ENCODE measurements at regions of chr20 and their contacts with region 1.

Region 1: DNA sequence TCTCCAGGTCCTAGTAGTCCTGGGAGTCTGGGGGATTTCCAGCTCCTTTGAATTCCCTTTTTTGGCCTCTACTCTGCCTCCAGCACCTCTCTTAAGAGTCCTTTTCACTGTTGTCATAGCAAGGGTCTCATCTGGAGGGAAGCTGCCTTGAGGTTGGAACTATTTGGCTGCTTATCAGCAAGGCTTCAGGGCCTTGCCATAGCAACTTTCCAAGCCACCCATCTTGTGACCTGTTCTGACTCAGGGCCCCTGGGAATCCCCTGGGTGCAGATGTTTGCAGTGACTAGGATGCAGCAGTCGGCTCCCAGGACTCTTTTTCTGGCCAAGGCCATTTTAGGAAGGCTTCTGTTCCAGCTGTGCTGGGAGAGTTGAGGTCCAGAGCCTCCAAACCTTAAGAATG is 12.4 kb downstream of the PKIG start:
- DNase-seq: peak in 5 of 7 donors; percentile 65 to 87 (median 77)
- H3K4me3 ChIP-seq: no peak overlapping the region
- H3K27ac ChIP-seq: peak overlapping the region in 2 of 5 donors; percentile 59
- H3K4me1 ChIP-seq: peaks cover 20 to 47% of the 10 kb centered on the region in 2 donors
- H3K27me3 ChIP-seq: no peaks in the 10 kb centered on the region
- CTCF ChIP-seq: no peak
- POLR2A ChIP-seq: no peak

Region 2: DNA sequence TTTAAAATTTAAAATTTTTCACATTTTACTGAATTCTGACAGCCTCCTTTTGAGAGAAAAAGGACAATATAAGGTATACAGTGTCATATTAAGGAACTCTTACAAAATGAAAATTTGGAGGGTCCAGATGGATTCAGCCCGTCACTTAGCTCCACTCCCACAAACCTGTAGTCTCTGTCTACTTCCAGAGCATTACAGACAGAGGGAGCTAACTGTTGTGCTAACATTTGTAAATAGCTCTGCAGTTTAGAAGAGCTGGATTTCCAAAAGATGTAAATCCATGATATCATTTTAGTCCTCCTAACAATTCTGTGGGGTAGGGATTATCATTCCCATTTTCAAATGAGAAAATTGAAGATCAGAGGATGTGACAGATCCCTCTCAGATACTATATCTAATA is 56.7 kb before region 1 on chr20:
- intact Hi-C with region 1: loop called in 1 of 2 experiments (anchors 5 kb)
- DNase-seq: no peak
- H3K4me3 ChIP-seq: no peak overlapping the region
- H3K27ac ChIP-seq: no peak overlapping the region
- H3K4me1 ChIP-seq: peaks cover 19 to 36% of the 10 kb centered on the region in 2 donors
- H3K27me3 ChIP-seq: no peaks in the 10 kb centered on the region
- CTCF ChIP-seq: peak in 3 of 6 experiments; percentile 12 to 33 (median 22)
- POLR2A ChIP-seq: no peak

Region 3: GRCh38 chr20:45052698-45053429 is 458.1 kb after region 1 on chr20:
- intact Hi-C with region 1: no loop called
- DNase-seq: peak in 2 of 7 donors; percentile 19 to 34
- H3K4me3 ChIP-seq: no peak overlapping the region
- H3K27ac ChIP-seq: peak overlapping the region in 1 of 5 donors; percentile 0
- H3K4me1 ChIP-seq: peaks cover 7 to 17% of the 10 kb centered on the region in 2 donors
- H3K27me3 ChIP-seq: no peaks in the 10 kb centered on the region
- CTCF ChIP-seq: no peak
- POLR2A ChIP-seq: no peak